ENCODE measurements at regions of chr10 and their contacts with region 1.

Region 1: DNA sequence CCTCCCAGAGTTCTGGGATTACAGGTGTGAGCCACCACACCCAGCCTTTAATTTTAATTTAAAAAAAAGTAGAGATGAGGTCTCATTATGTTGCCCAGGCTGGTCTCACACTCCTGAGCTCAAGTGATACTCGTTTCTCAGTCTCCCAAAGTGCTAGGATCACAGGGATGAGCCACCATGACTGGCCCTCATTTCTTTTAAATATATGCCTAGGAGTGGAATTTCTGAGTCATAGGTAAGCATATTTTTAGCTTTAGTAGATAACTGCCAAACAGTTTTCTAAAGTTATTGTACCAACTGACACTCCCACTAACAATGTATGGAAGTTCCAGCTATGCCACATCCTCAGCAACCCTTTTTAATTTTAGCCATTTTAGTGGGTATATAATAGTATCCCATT is 13.8 kb upstream of the PPIF start:
- DNase-seq: no peak
- ATAC-seq: no peak
- H3K4me3 ChIP-seq: no peak overlapping the region
- H3K27ac ChIP-seq: no peak overlapping the region
- H3K4me1 ChIP-seq: no peaks in the 10 kb centered on the region
- H3K27me3 ChIP-seq: peaks cover 7 to 42% of the 10 kb centered on the region in 2 experiments
- CTCF ChIP-seq: no peak
- EP300 ChIP-seq: no peak
- POLR2A ChIP-seq: no peak
- RAD21 ChIP-seq: no peak

Region 2: DNA sequence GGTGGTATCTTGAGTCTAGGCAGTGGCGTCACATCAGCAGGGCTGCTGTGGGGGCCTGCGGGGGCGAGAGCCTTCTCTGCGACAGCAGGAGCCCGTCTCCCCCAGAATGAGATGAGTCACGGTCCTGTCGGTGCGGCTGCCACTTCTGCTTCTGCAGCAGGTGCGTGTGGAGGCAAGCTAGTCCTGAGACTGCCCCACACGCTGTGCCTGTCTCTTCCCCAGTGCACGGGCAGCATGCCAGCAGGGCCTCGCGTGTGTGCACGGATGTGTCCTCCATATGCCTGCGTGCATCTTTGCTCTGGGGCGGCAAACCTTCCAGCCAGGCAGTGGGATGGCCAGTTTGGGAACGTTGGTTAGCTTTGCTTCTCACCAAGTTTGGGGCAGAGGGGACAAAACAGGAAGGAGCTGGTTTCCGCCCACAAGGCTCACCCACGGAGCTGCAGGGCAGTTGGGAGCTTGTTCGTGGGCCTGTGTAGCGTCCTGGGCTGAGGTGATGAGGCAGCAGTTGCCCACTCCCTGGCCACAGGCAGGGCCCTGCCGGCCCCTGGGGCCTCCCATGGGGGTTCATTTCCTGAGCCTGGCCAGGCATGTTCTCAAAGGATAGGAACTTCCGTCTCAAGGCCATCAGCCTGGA is 47.0 kb before region 1 on chr10:
- CTCF ChIA-PET with region 1: no interaction called
- POLR2A ChIA-PET with region 1: no interaction called
- in situ Hi-C with region 1: loop called (anchors 5 kb)
- intact Hi-C with region 1: no loop called
- DNase-seq: peak; percentile 59 to 83 (median 75)
- ATAC-seq: peak; percentile 58
- H3K4me3 ChIP-seq: no peak overlapping the region
- H3K27ac ChIP-seq: no peak overlapping the region
- H3K4me1 ChIP-seq: peaks cover 0 to 22% of the 10 kb centered on the region in 2 experiments; a peak in 3 of 5 replicates
- H3K27me3 ChIP-seq: no peaks in the 10 kb centered on the region
- CTCF ChIP-seq: no peak
- EP300 ChIP-seq: no peak
- POLR2A ChIP-seq: no peak
- RAD21 ChIP-seq: no peak

Measured in K562 (cell line).